ENCODE measurements at regions of chr21 and their contacts with region 1.

Region 1: DNA sequence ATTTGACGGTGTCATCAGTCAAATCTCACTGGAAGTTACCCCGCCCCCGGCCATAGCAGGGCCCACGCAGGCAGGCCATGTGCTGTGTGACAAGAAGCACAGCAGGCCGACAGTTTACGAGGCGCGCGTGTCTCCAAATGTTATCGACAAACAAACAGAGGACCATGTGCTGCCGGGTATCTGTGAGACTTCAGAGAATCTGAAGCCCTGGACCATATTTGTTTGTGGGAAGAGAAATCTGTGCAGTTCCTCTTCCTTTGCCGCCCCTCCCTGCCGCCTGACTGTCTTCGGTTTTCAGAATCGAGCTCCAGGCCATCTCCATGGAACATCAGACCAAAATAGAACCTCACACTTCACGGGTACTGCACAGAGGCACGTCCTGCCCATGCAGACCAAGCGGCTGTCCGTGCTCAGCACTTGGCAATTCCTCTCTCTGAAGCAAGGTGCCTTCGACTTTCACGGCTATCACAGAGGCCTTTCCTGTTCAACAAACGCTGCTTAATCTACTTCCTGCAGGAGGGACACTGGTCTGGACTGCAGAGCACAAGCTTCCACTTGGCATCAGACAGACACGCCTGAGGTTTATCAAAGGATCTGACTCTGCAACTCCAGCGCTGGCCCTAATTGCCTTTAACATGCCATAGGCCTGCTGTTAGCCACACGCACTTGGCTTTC is 135.7 kb upstream of the KRTAP19-8 start:
- DNase-seq: no peak
- H3K4me3 ChIP-seq: no peak overlapping the region
- H3K27ac ChIP-seq: no peak overlapping the region
- H3K4me1 ChIP-seq: no peaks in the 10 kb centered on the region
- H3K27me3 ChIP-seq: no peaks in the 10 kb centered on the region
- CTCF ChIP-seq: no peak

Region 2: DNA sequence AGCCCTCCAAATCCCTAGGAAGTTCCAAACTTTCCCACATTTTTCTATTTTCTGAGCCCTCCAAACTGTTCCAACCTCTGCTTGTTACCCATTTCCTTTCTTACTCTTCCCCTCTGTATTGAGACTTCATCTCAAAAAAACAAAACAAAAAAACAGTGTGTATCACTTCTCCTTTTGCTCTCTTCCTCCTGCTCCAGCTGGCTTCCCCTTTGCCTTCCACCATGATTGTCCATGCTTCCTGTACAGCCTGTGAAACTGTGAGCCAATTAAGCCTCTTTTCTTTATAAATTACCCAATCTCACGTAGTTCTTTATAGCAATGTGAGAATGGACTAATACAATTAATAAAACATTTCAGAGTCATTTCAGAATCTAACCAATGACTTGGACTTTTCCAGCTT is 66.1 kb before region 1 on chr21:
- CTCF ChIA-PET with region 1: no interaction called
- dilution Hi-C with region 1: no loop called
- in situ Hi-C with region 1: loop called in 1 of 2 experiments (anchors 5 kb)
- intact Hi-C with region 1: no loop called
- DNase-seq: no peak
- H3K4me3 ChIP-seq: no peak overlapping the region
- H3K27ac ChIP-seq: no peak overlapping the region
- H3K4me1 ChIP-seq: no peaks in the 10 kb centered on the region
- H3K27me3 ChIP-seq: peaks cover 3% of the 10 kb centered on the region
- CTCF ChIP-seq: no peak

Region 3: GRCh38 chr21:31117128-31117916 is 56.7 kb before region 1 on chr21:
- CTCF ChIA-PET with region 1: no interaction called
- dilution Hi-C with region 1: loop called (anchors 5 kb)
- in situ Hi-C with region 1: no loop called
- intact Hi-C with region 1: no loop called
- DNase-seq: peak; percentile 73
- H3K4me3 ChIP-seq: no peak overlapping the region
- H3K27ac ChIP-seq: no peak overlapping the region
- H3K4me1 ChIP-seq: peaks cover 12% of the 10 kb centered on the region
- H3K27me3 ChIP-seq: no peaks in the 10 kb centered on the region
- CTCF ChIP-seq: peak in 1 of 2 donors; percentile 15

Measured in mammary epithelial cell (primary cell).